ENCODE measurements at regions of chr12 and their contacts with region 1.

Region 1: GRCh38 chr12:80186727-80187217 is 87.4 kb downstream of the OTOGL start:
- DNase-seq: peak; percentile 63 to 67
- H3K4me3 ChIP-seq: no peak overlapping the region
- H3K4me3 Mint-ChIP-seq: no peak overlapping the region
- H3K27ac Mint-ChIP-seq: no peak overlapping the region
- H3K4me1 ChIP-seq: no peaks in the 10 kb centered on the region
- H3K4me1 Mint-ChIP-seq: no peaks in the 10 kb centered on the region
- H3K27me3 ChIP-seq: no peaks in the 10 kb centered on the region
- H3K27me3 Mint-ChIP-seq: no peaks in the 10 kb centered on the region
- CTCF ChIP-seq: peak; percentile 62 to 83

Region 2: DNA sequence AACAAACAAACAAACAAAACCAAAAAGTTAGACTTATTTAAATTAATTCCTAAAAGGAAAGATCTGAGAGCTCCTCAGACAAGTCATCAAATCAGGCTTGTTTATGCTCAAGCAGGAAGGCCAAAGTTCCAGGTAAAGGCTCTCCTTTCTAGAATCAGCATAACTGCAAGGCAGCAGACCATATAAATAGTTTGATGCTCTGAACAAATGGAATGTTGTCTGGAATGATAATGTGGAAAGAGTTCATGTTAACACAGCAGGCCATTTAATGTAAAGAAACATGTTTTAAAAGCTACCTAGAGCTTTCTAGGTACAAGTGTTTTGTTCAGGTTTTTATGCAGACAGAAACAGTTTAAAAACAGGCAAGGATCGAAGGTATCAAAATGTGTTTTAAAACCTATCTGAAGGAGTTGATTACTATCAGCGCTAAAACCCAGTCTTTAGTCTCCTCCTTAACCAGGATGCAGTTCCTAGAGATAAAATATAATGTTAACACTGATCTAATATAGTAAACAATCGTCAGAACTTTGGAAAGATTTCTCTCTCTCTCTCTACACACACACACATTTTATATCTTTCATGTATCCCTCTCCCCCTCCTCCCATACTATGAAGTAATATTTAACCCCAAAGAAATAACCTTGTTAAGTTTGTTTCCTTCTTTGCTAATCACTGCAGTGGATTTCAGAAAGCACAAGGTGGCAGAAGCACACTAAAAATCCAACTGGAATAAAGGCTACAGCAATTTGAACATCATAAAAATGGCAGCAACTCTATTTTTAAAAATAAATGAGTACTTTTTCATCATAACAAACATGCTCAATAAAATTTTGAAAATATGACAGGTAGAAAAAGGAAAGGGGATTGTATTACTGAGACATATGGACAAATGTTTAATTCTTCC is 631.5 kb before region 1 on chr12:
- CTCF ChIA-PET with region 1: no interaction called
- POLR2A ChIA-PET with region 1: no interaction called
- intact Hi-C with region 1: loop called (anchors 1 kb)
- DNase-seq: peak in 1 of 2 experiments; percentile 49
- H3K4me3 ChIP-seq: no peak overlapping the region
- H3K4me3 Mint-ChIP-seq: peak overlapping the region; percentile 12
- H3K27ac Mint-ChIP-seq: peak overlapping the region; percentile 76
- H3K4me1 ChIP-seq: peaks cover 73% of the 10 kb centered on the region
- H3K4me1 Mint-ChIP-seq: peaks cover 34% of the 10 kb centered on the region
- H3K27me3 ChIP-seq: no peaks in the 10 kb centered on the region
- H3K27me3 Mint-ChIP-seq: no peaks in the 10 kb centered on the region
- CTCF ChIP-seq: peak; percentile 56 to 71

Region 3: DNA sequence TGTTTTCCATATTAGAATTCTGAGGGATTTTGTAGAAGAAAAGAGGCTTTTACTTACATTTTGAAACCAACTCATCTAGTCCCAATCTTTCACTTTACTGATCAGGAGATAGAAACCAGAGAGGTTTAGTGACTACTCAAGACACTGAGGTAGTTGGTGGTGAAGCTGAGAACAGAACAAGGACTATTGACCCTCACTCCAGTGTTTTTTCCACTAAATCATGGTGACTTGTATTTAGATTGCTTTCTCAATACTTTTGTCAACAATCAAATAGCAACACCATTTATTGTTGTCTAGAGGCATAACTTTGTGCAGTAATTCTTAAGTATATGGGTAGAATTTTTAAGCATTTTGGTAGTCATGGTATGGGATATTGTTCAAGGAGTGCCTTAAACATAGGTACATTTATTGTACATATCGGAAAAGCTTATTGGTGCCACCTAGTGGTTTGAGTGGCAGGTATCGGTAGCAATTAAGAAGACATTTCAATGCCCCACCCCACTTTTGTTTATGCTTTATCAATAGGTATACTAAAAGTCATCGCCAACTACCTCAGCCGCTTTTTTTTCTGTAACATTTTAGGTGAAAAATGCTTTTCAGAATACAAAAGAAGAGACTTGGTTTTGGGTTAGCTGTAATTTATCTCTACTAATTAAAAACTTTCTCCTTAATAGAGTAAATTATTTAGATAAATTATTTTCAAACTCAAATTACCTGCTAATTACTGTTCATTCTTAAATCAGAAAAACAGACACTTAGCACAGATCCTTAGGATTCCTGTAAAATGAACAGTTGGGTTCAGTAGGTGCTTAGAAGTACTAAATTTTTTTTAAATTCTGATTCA is 448.7 kb before region 1 on chr12:
- CTCF ChIA-PET with region 1: no interaction called
- POLR2A ChIA-PET with region 1: no interaction called
- intact Hi-C with region 1: loop called (anchors 10 kb)
- DNase-seq: peak; percentile 62 to 69
- H3K4me3 ChIP-seq: no peak overlapping the region
- H3K4me3 Mint-ChIP-seq: no peak overlapping the region
- H3K27ac Mint-ChIP-seq: no peak overlapping the region
- H3K4me1 ChIP-seq: peaks cover 9% of the 10 kb centered on the region; the same call in 1 of the 2 replicates
- H3K4me1 Mint-ChIP-seq: peaks cover 6% of the 10 kb centered on the region
- H3K27me3 ChIP-seq: no peaks in the 10 kb centered on the region
- H3K27me3 Mint-ChIP-seq: no peaks in the 10 kb centered on the region
- CTCF ChIP-seq: peak; percentile 50 to 58

Region 4: GRCh38 chr12:79935021-79935623 is 251.7 kb before region 1 on chr12 and contains the start of gene PPP1R12A:
- CTCF ChIA-PET with region 1: no interaction called
- POLR2A ChIA-PET with region 1: no interaction called
- intact Hi-C with region 1: loop called (anchors 2 kb)
- DNase-seq: peak; percentile 97
- H3K4me3 ChIP-seq: peak within 1 kb of the TSS; percentile 100
- H3K4me3 Mint-ChIP-seq: peak within 1 kb of the TSS; percentile 83
- H3K27ac Mint-ChIP-seq: peak within 1 kb of the TSS; percentile 71
- H3K4me1 ChIP-seq: peaks cover 10% of the 10 kb centered on the region; the same call in 1 of the 2 replicates
- H3K4me1 Mint-ChIP-seq: peaks cover 5% of the 10 kb centered on the region
- H3K27me3 ChIP-seq: no peaks in the 10 kb centered on the region
- H3K27me3 Mint-ChIP-seq: no peaks in the 10 kb centered on the region
- CTCF ChIP-seq: no peak
- total RNA-seq, gene PPP1R12A: 60.7 and 62.5 TPM in 2 replicates

Region 5: DNA sequence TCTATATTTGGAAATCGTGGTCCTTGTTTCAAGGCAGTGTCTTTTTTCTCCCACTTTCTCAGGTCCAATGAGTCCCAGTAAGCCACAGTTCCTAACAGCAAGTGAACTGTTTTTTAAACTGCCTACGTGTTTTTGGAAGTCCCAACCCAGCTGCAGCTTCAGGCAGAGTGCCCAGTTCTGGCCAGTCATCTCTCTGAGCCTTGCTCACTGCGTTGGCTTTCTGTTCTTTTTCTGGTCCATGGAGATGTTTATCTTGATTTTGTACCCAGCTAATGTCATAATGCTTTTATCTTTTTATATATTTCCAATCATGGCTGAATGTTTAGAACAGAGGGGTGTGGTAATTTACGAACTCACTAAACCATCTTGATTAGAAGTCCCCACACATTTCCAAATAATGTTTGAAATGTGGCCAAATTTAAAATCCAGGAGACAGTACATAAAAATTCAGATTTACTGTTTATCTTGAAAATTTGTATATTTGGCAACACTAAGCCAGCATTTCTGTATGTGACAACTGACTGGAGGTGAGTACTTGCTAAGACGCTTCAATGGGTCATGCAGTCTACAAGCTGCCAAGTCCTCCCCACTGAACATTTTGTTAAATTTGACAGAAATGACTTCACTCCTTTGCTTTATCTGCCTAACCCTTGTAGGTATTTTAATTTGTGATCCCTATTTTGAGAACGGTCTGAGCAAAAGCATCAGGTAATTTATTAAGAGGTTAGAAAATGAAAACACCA is 133.6 kb before region 1 on chr12:
- CTCF ChIA-PET with region 1: no interaction called
- POLR2A ChIA-PET with region 1: no interaction called
- intact Hi-C with region 1: loop called (anchors 1 kb)
- DNase-seq: no peak
- H3K4me3 ChIP-seq: no peak overlapping the region
- H3K4me3 Mint-ChIP-seq: no peak overlapping the region
- H3K27ac Mint-ChIP-seq: no peak overlapping the region
- H3K4me1 ChIP-seq: no peaks in the 10 kb centered on the region
- H3K4me1 Mint-ChIP-seq: no peaks in the 10 kb centered on the region
- H3K27me3 ChIP-seq: no peaks in the 10 kb centered on the region
- H3K27me3 Mint-ChIP-seq: peaks cover 9% of the 10 kb centered on the region
- CTCF ChIP-seq: no peak

Region 6: GRCh38 chr12:80068173-80068572 is 118.6 kb before region 1 on chr12:
- CTCF ChIA-PET with region 1: no interaction called
- POLR2A ChIA-PET with region 1: no interaction called
- intact Hi-C with region 1: no loop called
- DNase-seq: peak in 1 of 2 experiments; percentile 26
- H3K4me3 ChIP-seq: no peak overlapping the region
- H3K4me3 Mint-ChIP-seq: no peak overlapping the region
- H3K27ac Mint-ChIP-seq: no peak overlapping the region
- H3K4me1 ChIP-seq: no peaks in the 10 kb centered on the region
- H3K4me1 Mint-ChIP-seq: no peaks in the 10 kb centered on the region
- H3K27me3 ChIP-seq: no peaks in the 10 kb centered on the region
- H3K27me3 Mint-ChIP-seq: peaks cover 12% of the 10 kb centered on the region
- CTCF ChIP-seq: no peak

Region 7: DNA sequence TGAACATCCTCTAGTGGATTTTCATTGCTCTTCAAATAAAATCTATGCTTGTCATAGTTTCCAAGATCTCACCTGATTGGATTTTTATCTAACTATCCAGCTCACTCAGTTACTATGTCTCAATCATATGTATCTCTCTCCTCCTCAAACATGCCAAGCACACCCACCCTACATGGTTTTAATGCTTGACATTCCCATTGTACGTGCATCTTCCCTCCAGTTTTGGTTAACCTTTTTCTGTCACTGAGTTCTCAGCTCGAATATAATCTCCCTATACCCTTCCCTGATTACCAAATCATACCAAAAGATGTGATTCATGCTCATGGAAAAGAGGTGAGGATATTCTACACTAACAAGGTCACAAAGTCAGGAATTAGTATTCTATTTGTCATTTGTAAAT is 245.3 kb after region 1 on chr12:
- CTCF ChIA-PET with region 1: no interaction called
- POLR2A ChIA-PET with region 1: no interaction called
- intact Hi-C with region 1: no loop called
- DNase-seq: no peak
- H3K4me3 ChIP-seq: no peak overlapping the region
- H3K4me3 Mint-ChIP-seq: no peak overlapping the region
- H3K27ac Mint-ChIP-seq: no peak overlapping the region
- H3K4me1 ChIP-seq: no peaks in the 10 kb centered on the region
- H3K4me1 Mint-ChIP-seq: no peaks in the 10 kb centered on the region
- H3K27me3 ChIP-seq: no peaks in the 10 kb centered on the region
- H3K27me3 Mint-ChIP-seq: peaks cover 4% of the 10 kb centered on the region
- CTCF ChIP-seq: no peak

Measured in Caco-2 (cell line).